H1 (cell line): ENCODE measurements at regions of chr15 and their contacts with region 1.

Region 1: GRCh38 chr15:70875001-70875782 is 17.0 kb downstream of the THAP10 start:
- DNase-seq: no peak
- H3K4me3 ChIP-seq: no peak overlapping the region
- H3K27ac ChIP-seq: no peak overlapping the region
- H3K4me1 ChIP-seq: no peaks in the 10 kb centered on the region
- H3K27me3 ChIP-seq: no peaks in the 10 kb centered on the region
- CTCF ChIP-seq: peak in 1 of 3 experiments; percentile 41; a peak in 1 of 4 replicates
- EP300 ChIP-seq: no peak
- POLR2A ChIP-seq: no peak
- RAD21 ChIP-seq: peak; percentile 53 to 68

Region 2: GRCh38 chr15:70826634-70827033 is 48.6 kb before region 1 on chr15:
- CTCF ChIA-PET with region 1: interaction called, 29 read pairs
- POLR2A ChIA-PET with region 1: no interaction called
- DNase-seq: no peak
- H3K4me3 ChIP-seq: no peak overlapping the region
- H3K27ac ChIP-seq: no peak overlapping the region
- H3K4me1 ChIP-seq: no peaks in the 10 kb centered on the region
- H3K27me3 ChIP-seq: no peaks in the 10 kb centered on the region
- CTCF ChIP-seq: no peak
- EP300 ChIP-seq: no peak
- POLR2A ChIP-seq: no peak
- RAD21 ChIP-seq: no peak

Region 3: DNA sequence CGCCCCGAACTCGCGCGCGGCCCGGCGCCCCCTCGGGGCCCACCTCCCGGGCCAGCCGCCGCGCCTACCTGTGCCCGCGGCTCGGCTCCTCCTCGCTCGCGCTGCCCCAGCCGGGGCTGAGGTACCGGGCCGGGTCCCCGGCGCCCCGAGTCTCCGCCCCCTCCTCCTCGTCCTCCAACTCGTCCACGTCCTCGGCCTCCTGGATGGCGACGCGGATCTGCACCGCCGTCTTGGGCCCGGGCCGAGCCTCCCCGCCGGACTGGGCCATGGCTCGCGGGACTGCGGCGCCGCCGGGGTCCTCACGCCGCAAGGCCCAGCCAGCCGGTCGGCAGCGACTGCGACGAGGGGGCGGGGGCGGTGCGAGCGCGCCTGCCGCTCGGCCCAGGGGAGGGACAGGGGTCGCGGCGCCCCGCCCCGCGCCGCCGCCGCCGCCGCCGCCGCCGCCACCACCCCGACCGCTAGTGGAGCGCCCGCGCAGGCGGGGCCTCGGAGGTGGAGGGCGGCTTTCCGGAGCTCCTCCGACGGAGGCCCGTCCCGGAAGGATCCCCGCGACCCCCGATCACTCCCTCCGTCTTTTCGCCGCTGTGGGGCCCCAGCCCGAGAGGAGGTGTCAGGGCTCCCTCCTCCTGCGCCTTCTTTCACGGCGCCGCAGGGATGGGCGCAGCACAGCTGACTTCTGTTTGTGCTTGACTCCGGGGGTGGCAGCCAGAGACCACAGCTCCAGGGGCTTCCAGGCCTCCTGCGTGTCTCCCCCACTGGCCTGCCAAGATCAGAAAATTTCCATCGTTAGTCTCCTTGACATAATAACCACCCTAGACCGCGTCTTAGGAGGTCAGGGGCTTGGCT is 21.1 kb before region 1 on chr15 and contains the start of gene LARP6:
- CTCF ChIA-PET with region 1: interaction called, 10 read pairs
- POLR2A ChIA-PET with region 1: interaction called, 4 read pairs
- DNase-seq: peak in 1 of 2 experiments; percentile 85
- H3K4me3 ChIP-seq: peak within 1 kb of the TSS; percentile 70 to 80 (median 73)
- H3K27ac ChIP-seq: no peak within 1 kb of the TSS; the same call in 1 of the 2 replicates
- H3K4me1 ChIP-seq: peaks cover 3 to 8% (median 5%) of the 10 kb centered on the region in 4 experiments; a peak in 4 of 7 replicates
- H3K27me3 ChIP-seq: 0 out of 7 replicates have a peak, but pooled peaks cover 0 to 3% (median 0%) of the 10 kb centered on the region in 4 experiments
- CTCF ChIP-seq: peak in 1 of 3 experiments; percentile 2; a peak in 1 of 4 replicates
- EP300 ChIP-seq: no peak
- POLR2A ChIP-seq: no peak; a peak in 1 of 3 replicates
- RAD21 ChIP-seq: no peak
- total RNA-seq, gene LARP6: 20.2 and 21.0 TPM in 2 replicates

Region 4: DNA sequence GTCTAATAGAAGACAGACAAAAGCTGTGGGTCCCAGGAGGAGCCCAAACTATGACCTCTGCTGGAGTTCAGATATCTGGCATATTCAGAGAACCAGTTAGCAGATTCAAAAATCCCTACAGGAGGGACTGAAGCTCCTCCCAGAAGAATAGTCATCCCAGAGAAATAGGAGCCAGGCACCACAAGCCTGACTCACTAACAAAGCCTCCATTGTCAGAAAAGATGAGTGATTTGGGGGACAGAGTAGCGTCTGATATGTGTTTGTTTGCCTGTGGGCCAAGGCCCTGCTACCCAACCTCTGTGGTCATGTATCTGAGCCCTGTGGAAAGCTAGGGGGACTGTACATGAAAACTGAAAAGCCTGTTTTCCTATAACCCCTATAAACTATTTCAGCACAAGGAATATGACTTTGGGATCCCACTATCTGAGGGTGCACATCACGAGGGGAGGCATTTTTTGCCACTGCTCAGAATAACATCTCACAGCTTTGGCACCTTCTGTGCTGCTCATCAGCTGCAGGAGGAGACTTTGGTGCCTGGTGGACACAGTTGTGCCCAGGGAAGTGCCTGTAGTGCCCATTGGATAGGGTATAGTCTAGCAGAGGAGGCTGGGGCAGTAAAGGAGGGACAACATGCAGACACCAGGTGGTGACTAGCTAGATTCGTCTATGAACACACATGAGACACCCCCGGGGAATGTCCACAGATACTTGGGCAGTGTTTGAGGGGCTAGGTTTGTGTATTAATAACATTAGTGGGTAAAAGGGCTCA is 11.6 kb before region 1 on chr15:
- CTCF ChIA-PET with region 1: interaction called, 10 read pairs
- POLR2A ChIA-PET with region 1: interaction called, 3 read pairs
- DNase-seq: no peak
- H3K4me3 ChIP-seq: no peak overlapping the region
- H3K27ac ChIP-seq: no peak overlapping the region
- H3K4me1 ChIP-seq: no peaks in the 10 kb centered on the region
- H3K27me3 ChIP-seq: no peaks in the 10 kb centered on the region
- CTCF ChIP-seq: no peak
- EP300 ChIP-seq: no peak
- POLR2A ChIP-seq: no peak
- RAD21 ChIP-seq: no peak

Region 5: GRCh38 chr15:70923311-70924080 is 48.3 kb after region 1 on chr15:
- CTCF ChIA-PET with region 1: no interaction called
- POLR2A ChIA-PET with region 1: no interaction called
- DNase-seq: no peak
- H3K4me3 ChIP-seq: no peak overlapping the region
- H3K27ac ChIP-seq: no peak overlapping the region
- H3K4me1 ChIP-seq: no peaks in the 10 kb centered on the region
- H3K27me3 ChIP-seq: no peaks in the 10 kb centered on the region
- CTCF ChIP-seq: no peak
- EP300 ChIP-seq: no peak
- POLR2A ChIP-seq: no peak
- RAD21 ChIP-seq: no peak

Region 6: GRCh38 chr15:71003319-71003718 is 128.1 kb after region 1 on chr15:
- CTCF ChIA-PET with region 1: no interaction called
- POLR2A ChIA-PET with region 1: no interaction called
- DNase-seq: no peak
- H3K4me3 ChIP-seq: no peak overlapping the region
- H3K27ac ChIP-seq: no peak overlapping the region
- H3K4me1 ChIP-seq: no peaks in the 10 kb centered on the region
- H3K27me3 ChIP-seq: no peaks in the 10 kb centered on the region
- CTCF ChIP-seq: no peak
- EP300 ChIP-seq: no peak
- POLR2A ChIP-seq: no peak
- RAD21 ChIP-seq: no peak